ENCODE measurements at regions of chr4 and their contacts with region 1.

Region 1: DNA sequence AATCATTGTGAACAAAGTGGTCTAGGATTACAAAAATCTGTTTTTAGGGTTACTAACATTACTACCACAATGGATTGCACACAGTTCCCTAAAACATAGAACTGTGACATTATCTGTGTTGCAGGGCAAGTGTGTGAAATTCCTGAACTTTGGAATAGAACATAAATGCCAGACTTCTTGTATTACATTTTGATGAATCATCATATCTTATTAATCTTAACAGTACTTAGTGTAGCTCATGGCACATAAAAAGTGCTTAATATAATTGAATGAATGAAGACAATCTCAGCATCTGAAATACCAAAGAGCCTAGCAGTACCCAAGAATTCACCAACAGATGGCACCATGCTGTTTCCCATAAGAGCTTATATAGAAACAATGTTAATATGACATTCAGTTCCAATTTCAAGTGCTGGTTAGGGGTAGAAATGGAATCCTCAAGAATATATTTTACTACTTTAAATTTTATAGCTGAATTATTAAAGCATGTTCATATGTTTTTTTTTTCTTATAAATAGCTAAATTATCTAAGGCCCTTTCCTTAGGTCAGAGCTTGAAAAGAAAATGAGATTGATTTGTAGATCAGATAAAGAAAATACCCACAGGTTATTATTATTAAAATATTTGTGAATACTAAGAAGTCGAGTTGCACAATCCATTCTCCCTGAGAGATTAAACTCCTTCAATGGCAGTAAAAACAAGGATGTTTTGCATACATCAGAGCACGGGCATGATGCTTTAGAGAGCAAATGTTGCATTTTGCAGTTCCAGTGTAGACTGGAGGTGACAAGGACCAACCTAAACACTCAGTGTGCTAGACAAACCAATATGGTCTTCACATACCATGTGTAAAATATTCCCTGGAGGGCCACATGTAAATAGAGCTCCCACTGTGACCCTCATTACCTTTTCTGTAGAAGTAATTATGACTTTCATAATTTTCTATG is 25.7 kb upstream of the SHISA3 start:
- DNase-seq: no peak
- ATAC-seq: peak; percentile 36; the same call in 1 of the 2 replicates
- H3K4me3 Mint-ChIP-seq: no peak overlapping the region
- H3K27ac Mint-ChIP-seq: no peak overlapping the region
- H3K4me1 Mint-ChIP-seq: peaks cover 5% of the 10 kb centered on the region
- H3K27me3 Mint-ChIP-seq: no peaks in the 10 kb centered on the region; the same call in 1 of the 2 replicates
- CTCF ChIP-seq: no peak

Region 2: GRCh38 chr4:42397635-42398447 is 26.3 kb after region 1 on chr4:
- CTCF ChIA-PET with region 1: interaction called, 11 read pairs
- POLR2A ChIA-PET with region 1: no interaction called
- DNase-seq: no peak
- ATAC-seq: peak; percentile 27
- H3K4me3 Mint-ChIP-seq: peak overlapping the region; percentile 82
- H3K27ac Mint-ChIP-seq: no peak overlapping the region
- H3K4me1 Mint-ChIP-seq: peaks cover 55% of the 10 kb centered on the region
- H3K27me3 Mint-ChIP-seq: peaks cover 74% of the 10 kb centered on the region
- CTCF ChIP-seq: no peak